ENCODE measurements at regions of chr15 and their contacts with region 1.

Region 1: GRCh38 chr15:44663409-44664308 is at the start of gene SPG11:
- DNase-seq: peak; percentile 99
- H3K4me3 ChIP-seq: peak within 1 kb of the TSS; percentile 86 to 100 (median 98)
- H3K27ac ChIP-seq: peak within 1 kb of the TSS; percentile 97 to 99 (median 99)
- H3K4me1 ChIP-seq: peaks cover 0 to 26% (median 18%) of the 10 kb centered on the region in 4 donors
- H3K27me3 ChIP-seq: no peaks in the 10 kb centered on the region
- CTCF ChIP-seq: peak; percentile 92 to 99 (median 94)
- EP300 ChIP-seq: peak in 2 of 4 donors; percentile 23 to 59
- POLR2A ChIP-seq: peak; percentile 94 to 95
- total RNA-seq, gene SPG11: 56.7 to 88.1 (median 64.9) TPM

Region 2: DNA sequence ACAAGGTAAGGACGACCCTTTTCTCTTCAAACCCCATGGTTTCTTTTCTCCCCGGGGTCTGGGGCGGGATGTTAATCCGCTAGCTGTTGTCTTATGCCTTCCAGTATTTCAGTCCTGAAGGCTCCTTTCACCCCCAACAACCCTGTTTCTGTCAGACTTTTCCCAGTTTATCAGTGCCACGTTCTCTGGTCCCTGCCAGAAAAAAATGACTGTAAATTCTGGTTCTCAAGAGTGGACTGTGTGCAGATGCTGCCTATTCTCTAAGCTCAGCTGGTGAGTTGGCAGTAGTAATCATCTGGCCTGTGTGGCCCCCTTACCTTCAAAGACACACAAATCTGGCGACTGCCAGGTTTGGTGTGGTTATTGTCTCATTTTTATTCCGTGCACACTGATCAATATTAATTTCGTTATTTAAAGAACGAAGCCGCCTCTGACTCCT is 374.3 kb before region 1 on chr15:
- intact Hi-C with region 1: loop called (anchors 2 kb)
- DNase-seq: no peak
- H3K4me3 ChIP-seq: peak overlapping the region; percentile 71 to 95 (median 90)
- H3K27ac ChIP-seq: peak overlapping the region; percentile 92 to 93 (median 93)
- H3K4me1 ChIP-seq: peaks cover 5 to 34% (median 33%) of the 10 kb centered on the region in 4 donors
- H3K27me3 ChIP-seq: no peaks in the 10 kb centered on the region
- CTCF ChIP-seq: no peak
- EP300 ChIP-seq: no peak
- POLR2A ChIP-seq: no peak

Region 3: GRCh38 chr15:44711356-44712107 is 47.9 kb after region 1 on chr15 and contains the start of gene B2M:
- intact Hi-C with region 1: loop called (anchors 1 kb)
- DNase-seq: peak; percentile 98
- H3K4me3 ChIP-seq: peak within 1 kb of the TSS; percentile 72 to 91 (median 84)
- H3K27ac ChIP-seq: peak within 1 kb of the TSS; percentile 96 to 99 (median 98)
- H3K4me1 ChIP-seq: peaks cover 0 to 42% (median 24%) of the 10 kb centered on the region in 4 donors
- H3K27me3 ChIP-seq: no peaks in the 10 kb centered on the region
- CTCF ChIP-seq: no peak
- EP300 ChIP-seq: no peak
- POLR2A ChIP-seq: peak; percentile 100
- total RNA-seq, gene B2M: 1,906 to 2,799 (median 2,534) TPM

Region 4: GRCh38 chr15:44728576-44729407 is 65.1 kb after region 1 on chr15:
- intact Hi-C with region 1: loop called (anchors 2 kb)
- DNase-seq: peak; percentile 98
- H3K4me3 ChIP-seq: peak overlapping the region; percentile 53 to 90 (median 77)
- H3K27ac ChIP-seq: peak overlapping the region; percentile 95 to 99 (median 98)
- H3K4me1 ChIP-seq: peaks cover 0 to 39% (median 33%) of the 10 kb centered on the region in 4 donors
- H3K27me3 ChIP-seq: no peaks in the 10 kb centered on the region
- CTCF ChIP-seq: no peak
- EP300 ChIP-seq: peak in 3 of 4 donors; percentile 53 to 81 (median 65)
- POLR2A ChIP-seq: peak; percentile 87 to 95

Region 5: DNA sequence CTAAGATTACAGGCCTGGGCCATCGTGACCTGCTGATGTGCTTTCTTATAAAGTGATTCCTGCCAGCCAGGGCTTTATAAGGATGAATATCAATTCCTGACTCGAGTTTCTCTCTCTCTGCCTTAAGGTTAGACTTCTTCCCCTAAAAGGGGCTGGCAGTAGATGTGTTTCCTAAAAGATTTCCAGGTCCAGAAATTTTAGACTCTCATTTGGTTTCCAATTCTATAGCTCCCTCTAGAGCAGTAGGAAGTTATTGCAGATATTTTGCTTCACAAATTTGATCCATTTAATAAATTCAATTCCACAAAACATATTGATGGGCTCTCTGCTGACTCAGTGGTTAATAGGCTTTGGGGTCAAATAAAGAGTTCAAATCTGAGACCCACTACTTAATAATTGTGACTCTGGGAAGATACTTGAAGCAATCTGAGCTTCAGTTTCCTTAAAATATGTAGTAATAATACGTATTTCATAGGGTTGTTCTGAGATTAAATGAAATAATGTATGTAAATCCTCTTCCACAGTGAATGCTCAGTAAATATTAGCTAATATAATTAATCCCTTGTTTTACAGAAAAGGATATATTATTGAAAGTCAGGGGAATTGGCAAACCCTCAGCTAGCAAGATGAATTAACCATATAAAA is 74.8 kb after region 1 on chr15:
- intact Hi-C with region 1: loop called (anchors 1 kb)
- DNase-seq: no peak
- H3K4me3 ChIP-seq: no peak overlapping the region
- H3K27ac ChIP-seq: no peak overlapping the region
- H3K4me1 ChIP-seq: peaks cover 0 to 11% (median 6%) of the 10 kb centered on the region in 4 donors
- H3K27me3 ChIP-seq: no peaks in the 10 kb centered on the region
- CTCF ChIP-seq: peak; percentile 59 to 75 (median 68)
- EP300 ChIP-seq: no peak
- POLR2A ChIP-seq: no peak

Region 6: GRCh38 chr15:45022871-45023658 is 359.4 kb after region 1 on chr15 and contains the start of gene SORD:
- intact Hi-C with region 1: loop called (anchors 2 kb)
- DNase-seq: peak; percentile 94
- H3K4me3 ChIP-seq: peak within 1 kb of the TSS; percentile 58 to 75 (median 65)
- H3K27ac ChIP-seq: peak within 1 kb of the TSS; percentile 73 to 77 (median 75)
- H3K4me1 ChIP-seq: peaks cover 0 to 17% (median 13%) of the 10 kb centered on the region in 4 donors
- H3K27me3 ChIP-seq: no peaks in the 10 kb centered on the region
- CTCF ChIP-seq: no peak
- EP300 ChIP-seq: no peak
- POLR2A ChIP-seq: no peak
- total RNA-seq, gene SORD: 3.3 to 10.0 (median 7.6) TPM

Measured in sigmoid colon (tissue), 7 donors.